Cardiac septum (tissue), 1 donor: ENCODE measurements at regions of chr11 and their contacts with region 1.

Region 1: GRCh38 chr11:75248690-75249268 is 8.2 kb downstream of the TPBGL start:
- DNase-seq: peak; percentile 92

Region 2: DNA sequence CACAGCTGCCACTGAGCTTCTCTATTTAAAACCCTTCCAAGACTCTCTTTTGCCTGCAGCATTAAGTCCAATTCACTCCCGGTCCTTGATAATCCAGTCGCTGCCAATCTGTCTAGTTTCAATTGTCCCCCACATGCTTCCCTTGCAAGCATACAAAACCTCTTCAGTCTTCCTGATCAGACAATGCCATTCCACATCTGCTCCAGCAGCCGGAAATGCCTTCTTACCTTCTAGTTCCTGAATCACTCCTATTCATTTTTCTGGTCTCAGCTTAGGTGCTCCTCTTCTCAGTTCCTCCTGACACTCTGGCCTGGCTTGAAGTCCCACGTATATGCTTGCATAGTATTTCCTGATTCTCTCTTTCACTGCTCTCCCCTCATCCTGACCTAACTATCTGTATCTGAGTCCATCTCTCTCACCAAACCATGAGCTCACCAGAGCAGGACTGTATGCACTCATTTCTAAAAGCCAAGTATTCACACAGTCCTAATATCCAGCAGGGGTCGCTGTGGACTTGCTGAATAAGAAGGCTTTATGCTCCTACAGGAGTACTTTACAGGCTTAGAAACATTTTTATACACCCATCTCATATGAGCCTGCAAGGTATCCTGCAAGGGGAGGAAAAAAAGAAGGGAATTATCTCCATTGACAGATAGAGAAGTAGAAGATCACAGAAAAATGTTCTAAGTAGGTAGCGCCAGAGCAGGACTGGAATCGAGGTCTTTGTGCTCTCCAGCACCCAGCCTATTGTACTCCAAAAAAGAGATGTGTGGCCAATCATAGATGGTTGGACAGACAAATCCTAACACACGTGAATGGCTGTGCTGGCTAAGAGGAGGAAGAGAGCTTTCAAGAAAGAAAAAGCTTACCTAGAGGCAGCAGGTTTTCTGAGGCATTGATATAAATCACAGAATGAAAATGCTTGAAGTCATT is 319.1 kb before region 1 on chr11:
- intact Hi-C with region 1: loop called (anchors 2 kb)
- DNase-seq: peak; percentile 76

Region 3: DNA sequence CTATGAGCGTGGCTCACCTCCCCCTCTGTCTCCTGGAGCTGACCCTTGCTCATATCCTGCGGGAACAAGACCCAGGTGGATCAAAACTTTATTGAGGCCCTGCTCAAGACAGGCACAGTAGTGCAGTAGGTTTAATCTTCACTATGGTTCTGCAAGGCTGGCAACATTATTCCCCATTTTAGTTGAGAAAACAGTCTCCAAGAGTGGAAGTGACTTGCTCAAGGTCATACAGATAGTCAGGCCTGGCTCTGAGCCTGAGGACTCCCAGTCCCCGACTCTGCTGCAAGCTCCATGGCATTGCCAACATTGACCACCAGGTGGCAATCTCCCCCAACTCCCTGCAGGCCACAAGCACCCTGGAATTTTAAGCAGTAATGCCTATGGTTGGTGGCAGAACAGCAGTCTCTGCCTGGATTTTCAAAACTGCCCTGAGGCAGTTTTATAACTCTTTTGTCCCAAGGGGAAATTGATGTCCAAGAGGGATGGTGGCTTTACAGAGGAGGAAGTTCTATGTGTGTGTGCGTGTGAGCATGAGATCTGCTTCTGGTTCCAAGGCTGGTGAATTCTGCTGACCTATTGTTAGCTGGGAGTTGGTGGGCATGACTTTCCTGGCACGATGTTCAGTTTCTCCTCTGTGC is 225.9 kb before region 1 on chr11:
- intact Hi-C with region 1: loop called (anchors 2 kb)
- DNase-seq: peak; percentile 88

Region 4: GRCh38 chr11:75142714-75143419 is 105.9 kb before region 1 on chr11:
- intact Hi-C with region 1: loop called (anchors 2 kb)
- DNase-seq: peak; percentile 87

Region 5: DNA sequence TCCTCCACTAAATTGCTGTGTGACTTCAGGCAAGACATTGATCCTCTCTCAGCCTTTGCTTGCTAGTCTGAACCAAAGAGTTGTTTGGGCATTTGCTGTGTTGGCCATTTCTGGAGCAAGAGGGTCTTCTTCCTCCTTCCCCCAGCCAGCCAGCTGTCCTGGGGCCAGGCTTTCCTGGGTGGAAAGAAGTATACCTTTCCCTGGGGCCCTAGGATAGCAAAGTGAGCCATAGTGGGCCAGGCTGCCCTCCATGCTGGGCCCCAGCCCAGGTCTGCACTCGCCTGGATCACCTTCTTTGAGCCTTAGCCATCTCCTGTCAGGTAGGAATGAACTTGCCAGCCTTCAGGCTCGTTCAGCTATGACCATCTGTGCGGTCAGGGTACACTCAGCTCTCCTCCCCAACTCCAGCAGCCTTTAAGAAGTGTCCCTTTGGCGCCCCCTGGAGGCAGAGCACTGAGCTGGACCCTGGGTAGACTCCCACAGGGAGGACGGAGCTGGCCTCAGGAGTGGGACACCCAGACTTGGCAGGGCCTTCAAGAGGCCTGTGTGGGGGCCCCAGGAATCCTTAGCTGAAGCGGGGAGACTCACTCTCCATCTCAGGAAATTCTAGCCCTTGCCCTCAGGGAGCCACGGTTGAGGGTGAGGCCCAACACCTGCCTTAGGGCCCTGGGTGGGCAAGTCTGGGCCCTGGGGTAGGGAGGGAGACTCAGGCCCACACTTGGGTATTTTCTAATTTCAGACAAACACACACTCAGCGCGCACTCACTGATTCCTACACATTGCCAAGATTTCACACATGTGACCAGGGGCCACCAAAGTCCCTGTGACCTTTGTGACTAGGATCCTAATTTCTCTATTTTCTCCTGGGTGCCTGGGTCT is 43.9 kb before region 1 on chr11:
- intact Hi-C with region 1: loop called (anchors 5 kb)
- DNase-seq: peak; percentile 89